PC-3 (cell line): ENCODE measurements at regions of chr1 and their contacts with region 1.

Region 1: DNA sequence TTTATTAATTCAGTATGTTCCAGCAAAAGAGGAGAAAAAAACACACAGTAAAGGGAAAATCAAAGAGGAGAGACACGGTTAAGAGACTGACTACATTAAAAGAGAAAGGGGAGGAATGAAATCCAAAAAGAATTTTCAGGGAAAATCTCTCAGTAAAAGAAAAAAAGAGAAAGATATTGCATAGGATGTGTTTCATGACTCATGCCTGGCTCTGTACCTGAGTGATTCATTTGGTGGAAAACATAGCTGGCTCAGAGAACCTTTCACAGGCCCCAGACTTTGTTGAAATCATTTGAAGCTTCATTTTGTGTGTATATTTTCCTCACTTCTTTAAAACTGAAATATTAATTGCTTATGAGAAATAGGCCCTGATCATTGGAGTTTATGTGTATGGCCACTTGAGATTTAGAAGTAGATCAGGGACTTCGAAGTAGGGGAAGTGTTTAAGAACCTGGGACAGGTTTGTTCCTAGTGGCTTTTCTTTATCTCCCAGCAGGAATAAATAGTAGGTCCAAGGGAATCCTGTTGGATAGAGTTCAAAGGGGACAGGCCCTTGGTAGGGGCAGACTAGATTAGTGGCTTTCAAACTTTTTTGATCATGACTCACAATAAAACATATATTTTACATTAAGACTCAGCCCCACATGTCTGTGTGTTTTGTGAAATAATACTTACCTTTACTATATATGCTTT is 239.1 kb upstream of the SGIP1 start:
- DNase-seq: peak; percentile 85
- ATAC-seq: peak; percentile 65
- H3K4me3 ChIP-seq: no peak overlapping the region
- H3K27ac ChIP-seq: peak overlapping the region; percentile 95
- H3K4me1 ChIP-seq: peaks cover 62% of the 10 kb centered on the region
- H3K27me3 ChIP-seq: no peaks in the 10 kb centered on the region
- CTCF ChIP-seq: no peak

Region 2: GRCh38 chr1:66331657-66332547 is 37.1 kb after region 1 on chr1:
- CTCF ChIA-PET with region 1: no interaction called
- POLR2A ChIA-PET with region 1: no interaction called
- intact Hi-C with region 1: loop called (anchors 2 kb)
- DNase-seq: peak; percentile 69
- ATAC-seq: peak; percentile 91
- H3K4me3 ChIP-seq: peak overlapping the region; percentile 66
- H3K27ac ChIP-seq: peak overlapping the region; percentile 86
- H3K4me1 ChIP-seq: peaks cover 26% of the 10 kb centered on the region
- H3K27me3 ChIP-seq: no peaks in the 10 kb centered on the region
- CTCF ChIP-seq: peak; percentile 20; the same call in 1 of the 2 replicates

Region 3: DNA sequence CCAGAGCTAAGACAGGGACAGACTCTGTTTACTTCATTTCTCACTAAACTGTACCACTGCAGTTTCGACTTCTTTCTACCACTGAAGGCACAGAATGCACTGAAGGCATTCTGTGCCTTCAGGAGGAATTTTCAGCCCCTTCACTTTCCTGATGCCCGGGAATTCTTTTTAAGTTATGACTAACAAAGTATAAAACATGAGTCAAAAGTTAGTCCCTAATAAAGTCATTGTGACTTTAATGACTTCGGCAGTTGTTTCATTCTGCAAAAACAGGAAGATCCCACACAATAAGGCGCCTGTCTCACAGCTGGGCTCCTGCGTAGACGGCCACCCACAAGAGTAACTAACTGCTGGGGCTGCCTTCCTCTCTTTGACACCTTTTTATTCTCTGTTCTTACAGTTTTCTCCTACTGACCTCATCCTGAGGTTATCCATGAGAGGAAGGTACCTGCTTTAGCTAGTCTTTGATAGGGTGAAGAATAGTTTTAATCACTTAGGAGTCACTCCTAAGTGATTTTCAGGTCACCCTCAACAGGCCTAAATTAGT is 55.2 kb after region 1 on chr1:
- CTCF ChIA-PET with region 1: no interaction called
- POLR2A ChIA-PET with region 1: no interaction called
- intact Hi-C with region 1: loop called (anchors 5 kb)
- DNase-seq: peak; percentile 81
- ATAC-seq: peak; percentile 77
- H3K4me3 ChIP-seq: 0 out of 2 replicates have a peak overlapping the region, but pooled peaks have one; percentile 25
- H3K27ac ChIP-seq: peak overlapping the region; percentile 70
- H3K4me1 ChIP-seq: peaks cover 32% of the 10 kb centered on the region
- H3K27me3 ChIP-seq: no peaks in the 10 kb centered on the region
- CTCF ChIP-seq: no peak